ENCODE measurements at regions of chr6 and their contacts with region 1.

Region 1: DNA sequence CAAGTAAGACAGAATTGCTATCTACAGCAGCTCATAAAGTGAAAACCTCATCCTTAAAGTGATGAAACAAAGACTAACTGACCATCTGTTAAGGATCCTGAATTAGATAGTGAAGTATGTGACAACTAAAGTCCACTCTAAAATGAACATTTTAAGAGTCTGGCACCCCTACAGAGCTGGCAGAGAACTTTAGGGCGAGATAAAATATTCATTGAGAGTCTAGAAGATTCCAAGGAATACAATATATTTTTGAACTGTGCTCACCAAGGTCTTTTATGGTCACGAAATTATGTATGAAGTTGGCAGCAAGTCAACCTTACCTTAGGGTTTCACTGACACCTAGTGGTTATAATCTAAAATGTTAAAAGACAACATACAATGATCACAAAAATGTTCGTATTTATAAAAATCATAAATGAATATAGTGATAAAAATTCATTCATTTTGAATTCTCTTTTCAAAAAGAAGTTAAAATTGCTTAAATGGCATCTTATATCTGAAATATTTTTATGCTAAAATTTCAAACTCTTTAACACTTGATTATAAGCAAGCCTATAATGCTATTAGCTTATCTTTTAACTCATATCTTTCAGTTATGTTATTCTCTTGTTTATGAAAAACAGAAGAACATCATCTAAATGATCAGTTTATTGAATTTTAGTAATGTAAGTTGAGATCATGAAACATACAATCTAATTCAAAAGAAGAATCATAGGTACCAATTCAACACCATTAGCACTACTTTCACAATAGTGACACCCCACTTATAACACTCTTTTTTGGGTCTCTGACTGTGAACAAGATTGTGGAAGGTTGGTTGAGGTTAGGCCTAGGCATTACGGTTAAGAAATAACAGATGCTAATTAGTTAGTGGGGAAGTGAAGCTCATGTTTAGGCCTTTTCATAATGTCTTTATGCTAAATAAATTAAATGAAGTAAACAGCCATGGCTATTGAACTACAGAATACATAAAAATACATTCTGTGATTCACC is 27.5 kb downstream of the RSPH3 start:
- DNase-seq: peak; percentile 31
- ATAC-seq: peak; percentile 85
- H3K4me3 ChIP-seq: no peak overlapping the region
- H3K27ac ChIP-seq: no peak overlapping the region
- H3K4me1 ChIP-seq: no peaks in the 10 kb centered on the region
- H3K27me3 ChIP-seq: no peaks in the 10 kb centered on the region
- CTCF ChIP-seq: peak; percentile 33 to 68 (median 36); a peak in 4 of 6 replicates
- EP300 ChIP-seq: no peak
- POLR2A ChIP-seq: no peak
- RAD21 ChIP-seq: peak; percentile 81

Region 2: GRCh38 chr6:158213925-158214674 is 758.4 kb before region 1 on chr6:
- CTCF ChIA-PET with region 1: interaction called, 9 read pairs
- POLR2A ChIA-PET with region 1: no interaction called
- RAD21 ChIA-PET with region 1: interaction called, 17 read pairs
- SMC1A ChIA-PET with region 1: interaction called, 9 read pairs
- in situ Hi-C with region 1: no loop called
- intact Hi-C with region 1: loop called (anchors 5 kb)
- DNase-seq: peak; percentile 23
- ATAC-seq: peak; percentile 100
- H3K4me3 ChIP-seq: no peak overlapping the region
- H3K27ac ChIP-seq: no peak overlapping the region
- H3K4me1 ChIP-seq: no peaks in the 10 kb centered on the region
- H3K27me3 ChIP-seq: no peaks in the 10 kb centered on the region
- CTCF ChIP-seq: peak; percentile 78 to 91 (median 81); a peak in 5 of 6 replicates
- EP300 ChIP-seq: no peak
- POLR2A ChIP-seq: no peak
- RAD21 ChIP-seq: peak; percentile 88

Region 3: GRCh38 chr6:158704181-158704822 is 268.2 kb before region 1 on chr6:
- CTCF ChIA-PET with region 1: interaction called, 83 read pairs
- POLR2A ChIA-PET with region 1: interaction called, 5 read pairs
- RAD21 ChIA-PET with region 1: interaction called, 29 read pairs
- SMC1A ChIA-PET with region 1: interaction called, 68 read pairs
- in situ Hi-C with region 1: loop called (anchors 5 kb)
- intact Hi-C with region 1: loop called (anchors 1 kb)
- DNase-seq: no peak
- ATAC-seq: peak; percentile 99
- H3K4me3 ChIP-seq: peak overlapping the region; percentile 45; the same call in 1 of the 2 replicates
- H3K27ac ChIP-seq: no peak overlapping the region
- H3K4me1 ChIP-seq: peaks cover 9% of the 10 kb centered on the region
- H3K27me3 ChIP-seq: no peaks in the 10 kb centered on the region
- CTCF ChIP-seq: peak; percentile 97 to 99 (median 98); a peak in 5 of 6 replicates
- EP300 ChIP-seq: no peak
- POLR2A ChIP-seq: no peak
- RAD21 ChIP-seq: peak; percentile 97

Region 4: DNA sequence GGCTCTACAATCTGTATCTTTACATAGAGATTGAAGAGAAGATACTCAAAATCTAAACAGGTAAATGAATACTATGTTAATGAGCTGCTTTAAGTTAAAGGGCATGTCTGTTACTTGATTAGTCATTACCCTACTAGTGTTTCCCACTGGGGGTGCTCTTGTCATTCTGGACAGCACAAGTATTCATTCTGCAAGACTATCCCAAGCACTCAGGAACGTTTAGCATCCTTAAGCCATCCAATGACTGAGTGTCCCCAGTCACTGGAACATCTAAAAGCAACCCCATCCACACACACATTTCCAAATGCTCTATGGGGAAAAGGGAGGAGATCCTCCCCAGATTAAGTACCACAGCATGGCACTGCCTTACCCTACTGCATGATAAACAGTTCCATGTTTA is 179.1 kb before region 1 on chr6:
- CTCF ChIA-PET with region 1: interaction called, 127 read pairs
- POLR2A ChIA-PET with region 1: interaction called, 3 read pairs
- RAD21 ChIA-PET with region 1: interaction called, 33 read pairs
- SMC1A ChIA-PET with region 1: interaction called, 49 read pairs
- in situ Hi-C with region 1: loop called (anchors 5 kb)
- intact Hi-C with region 1: loop called (anchors 1 kb)
- DNase-seq: no peak
- ATAC-seq: peak; percentile 74
- H3K4me3 ChIP-seq: 0 out of 2 replicates have a peak overlapping the region, but pooled peaks have one; percentile 36
- H3K27ac ChIP-seq: no peak overlapping the region
- H3K4me1 ChIP-seq: peaks cover 65% of the 10 kb centered on the region
- H3K27me3 ChIP-seq: no peaks in the 10 kb centered on the region
- CTCF ChIP-seq: peak; percentile 62 to 69 (median 68)
- EP300 ChIP-seq: no peak
- POLR2A ChIP-seq: no peak
- RAD21 ChIP-seq: peak; percentile 82

Region 5: GRCh38 chr6:158819213-158819909 is 153.2 kb before region 1 on chr6 and contains the start of gene EZR:
- CTCF ChIA-PET with region 1: interaction called, 5 read pairs
- POLR2A ChIA-PET with region 1: no interaction called
- RAD21 ChIA-PET with region 1: interaction called, 8 read pairs
- SMC1A ChIA-PET with region 1: interaction called, 39 read pairs
- in situ Hi-C with region 1: no loop called
- intact Hi-C with region 1: loop called (anchors 5 kb)
- DNase-seq: no peak
- ATAC-seq: peak; percentile 66
- H3K4me3 ChIP-seq: peak within 1 kb of the TSS; percentile 82
- H3K27ac ChIP-seq: peak within 1 kb of the TSS; percentile 66
- H3K4me1 ChIP-seq: peaks cover 14% of the 10 kb centered on the region
- H3K27me3 ChIP-seq: no peaks in the 10 kb centered on the region
- CTCF ChIP-seq: no peak; a peak in 1 of 6 replicates
- EP300 ChIP-seq: no peak
- POLR2A ChIP-seq: peak; percentile 93
- RAD21 ChIP-seq: 0 out of 2 replicates have a peak, but pooled peaks have one; percentile 8
- polyA plus RNA-seq, gene EZR: 79.1 to 98.6 TPM

Region 6: GRCh38 chr6:158999666-159000403 is 27.3 kb after region 1 on chr6 and contains the start of gene RSPH3:
- CTCF ChIA-PET with region 1: interaction called, 20 read pairs
- POLR2A ChIA-PET with region 1: interaction called, 4 read pairs
- RAD21 ChIA-PET with region 1: interaction called, 4 read pairs
- SMC1A ChIA-PET with region 1: interaction called, 5 read pairs
- in situ Hi-C with region 1: no loop called
- intact Hi-C with region 1: no loop called
- DNase-seq: peak; percentile 77
- ATAC-seq: peak; percentile 96
- H3K4me3 ChIP-seq: peak within 1 kb of the TSS; percentile 81
- H3K27ac ChIP-seq: peak within 1 kb of the TSS; percentile 87
- H3K4me1 ChIP-seq: peaks cover 3% of the 10 kb centered on the region; the same call in 1 of the 2 replicates
- H3K27me3 ChIP-seq: no peaks in the 10 kb centered on the region
- CTCF ChIP-seq: peak in 1 of 3 experiments; percentile 34; a peak in 2 of 6 replicates
- EP300 ChIP-seq: no peak
- POLR2A ChIP-seq: peak; percentile 98
- RAD21 ChIP-seq: peak; percentile 21; the same call in 1 of the 2 replicates
- polyA plus RNA-seq, gene RSPH3: 0.40 to 0.51 TPM

Region 7: DNA sequence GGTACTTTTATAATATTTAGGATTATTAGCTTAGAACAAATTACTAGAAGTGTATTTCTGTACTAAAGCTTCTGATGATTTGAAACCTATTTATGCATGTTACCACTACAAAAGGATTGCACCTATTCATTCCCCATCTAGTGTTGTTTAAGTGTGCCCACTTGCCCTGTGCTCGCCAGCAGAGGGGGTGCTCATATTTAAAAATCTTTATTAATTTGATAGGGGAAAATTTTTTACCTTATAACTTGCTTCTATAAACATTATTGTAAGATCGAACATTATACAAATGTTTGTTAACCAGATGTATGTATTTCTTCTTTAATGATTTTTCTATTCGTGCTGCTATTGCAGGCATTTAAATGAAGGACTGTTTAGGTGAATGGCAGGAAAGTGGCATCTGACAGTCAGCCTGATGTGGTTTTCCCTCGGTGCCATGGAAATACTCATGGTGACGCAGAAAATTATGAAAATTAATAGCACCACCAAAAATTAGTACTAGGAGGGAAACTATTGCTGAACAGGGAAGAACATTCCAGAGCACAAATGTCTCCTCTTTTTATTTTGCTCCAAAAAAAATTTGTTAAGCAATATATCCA is 152.6 kb after region 1 on chr6:
- CTCF ChIA-PET with region 1: no interaction called
- POLR2A ChIA-PET with region 1: no interaction called
- RAD21 ChIA-PET with region 1: no interaction called
- SMC1A ChIA-PET with region 1: no interaction called
- in situ Hi-C with region 1: no loop called
- intact Hi-C with region 1: no loop called
- DNase-seq: no peak
- ATAC-seq: no peak
- H3K4me3 ChIP-seq: no peak overlapping the region
- H3K27ac ChIP-seq: no peak overlapping the region
- H3K4me1 ChIP-seq: peaks cover 19% of the 10 kb centered on the region
- H3K27me3 ChIP-seq: peaks cover 0 to 3% of the 10 kb centered on the region in 2 experiments; a peak in 1 of 4 replicates
- CTCF ChIP-seq: 0 out of 6 replicates have a peak, but pooled peaks of 2 of the 3 experiments have one; percentile 5 to 9
- EP300 ChIP-seq: no peak
- POLR2A ChIP-seq: no peak
- RAD21 ChIP-seq: 0 out of 2 replicates have a peak, but pooled peaks have one; percentile 2